AG04450 (cell line): ENCODE measurements at regions of chr21 and their contacts with region 1.

Region 1: DNA sequence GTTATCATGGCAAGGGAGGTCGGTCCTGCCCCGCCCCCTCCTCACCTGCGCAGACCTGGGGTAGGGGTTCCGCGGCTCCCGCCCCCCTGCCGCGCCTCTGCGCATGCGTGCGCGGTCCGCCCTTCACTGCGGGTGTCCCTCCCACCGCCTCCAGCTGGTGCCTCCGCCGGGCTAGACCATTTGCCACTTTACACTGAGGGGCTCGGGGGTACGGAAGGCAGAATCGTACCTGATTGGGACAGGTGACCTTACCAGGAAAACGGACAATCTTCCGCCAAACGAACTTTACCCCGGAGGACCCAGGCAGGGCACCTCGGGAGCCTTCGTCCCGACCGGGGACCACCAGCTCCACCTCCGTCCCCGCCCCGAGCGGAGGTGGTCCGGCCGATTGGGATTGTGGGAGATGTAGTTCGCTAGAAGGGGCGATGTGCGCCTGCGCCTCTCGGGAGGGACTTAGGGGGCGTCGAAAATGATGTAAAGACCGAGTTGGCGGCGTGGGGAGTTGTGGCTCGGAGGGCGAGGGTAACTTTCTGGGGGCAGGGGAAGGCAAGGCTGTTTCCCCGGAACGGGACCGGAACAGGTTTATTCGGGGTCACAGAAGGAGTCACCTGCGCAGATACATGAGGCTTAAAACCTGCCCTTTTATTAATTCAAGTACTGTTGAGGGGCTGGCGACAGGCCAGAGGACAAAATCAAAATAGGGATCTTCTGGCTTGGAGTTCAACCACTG is at the start of gene DNAJC28:
- DNase-seq: peak; percentile 80
- H3K4me3 ChIP-seq: peak within 1 kb of the TSS; percentile 96
- H3K27ac ChIP-seq: no peak within 1 kb of the TSS
- H3K27me3 ChIP-seq: peaks cover 4% of the 10 kb centered on the region
- CTCF ChIP-seq: no peak
- polyA plus RNA-seq, gene DNAJC28: 1.3 and 1.9 TPM in 2 replicates

Region 2: GRCh38 chr21:33479679-33480480 is 11.7 kb before region 1 on chr21 and contains the start of gene TMEM50B:
- CTCF ChIA-PET with region 1: interaction called, 4 read pairs
- POLR2A ChIA-PET with region 1: interaction called, 64 read pairs
- DNase-seq: peak; percentile 91
- H3K4me3 ChIP-seq: peak within 1 kb of the TSS; percentile 82
- H3K27ac ChIP-seq: peak within 1 kb of the TSS; percentile 85
- H3K27me3 ChIP-seq: no peaks in the 10 kb centered on the region
- CTCF ChIP-seq: peak; percentile 45; the same call in 1 of the 2 replicates
- polyA plus RNA-seq, gene TMEM50B: 24.4 and 33.8 TPM in 2 replicates